ENCODE measurements at regions of chr15 and their contacts with region 1.

Region 1: DNA sequence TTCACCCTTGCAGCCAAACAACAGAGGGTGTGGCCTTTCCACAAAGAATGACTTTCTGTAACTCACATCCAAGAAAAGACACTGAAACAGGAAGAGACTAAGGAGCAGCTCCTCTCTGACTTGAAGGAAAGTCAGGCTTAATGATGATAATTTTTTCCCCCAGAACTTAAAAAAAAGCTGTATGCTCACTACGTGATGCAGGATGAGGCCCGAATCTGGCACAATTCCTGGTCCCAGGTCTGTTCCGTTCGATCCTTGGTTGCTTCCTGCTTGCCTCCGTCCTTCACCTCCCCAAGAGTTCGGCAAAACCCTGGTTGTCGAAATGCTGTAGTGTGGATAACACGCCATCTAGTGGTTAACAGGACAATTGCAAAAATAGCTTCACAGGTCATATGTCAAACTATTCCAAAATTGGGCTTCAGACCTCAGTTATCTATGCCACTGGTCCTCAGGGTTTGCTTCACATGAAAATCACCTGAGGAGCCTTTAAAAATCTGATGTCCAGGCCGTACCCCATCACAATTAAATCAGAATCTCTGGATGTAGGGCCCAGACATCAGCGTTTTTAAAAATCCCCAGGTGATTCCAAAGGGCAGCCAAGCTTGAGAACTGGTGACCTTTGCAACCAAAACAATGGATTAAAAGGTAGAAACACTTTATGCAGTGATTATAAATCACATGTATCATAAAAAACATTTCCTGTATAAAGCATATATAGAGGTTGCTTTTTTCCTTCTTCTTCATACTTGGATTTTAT is 28.1 kb upstream of the SYNM start:
- DNase-seq: peak; percentile 86
- ATAC-seq: peak; percentile 94
- H3K4me3 ChIP-seq: peak overlapping the region; percentile 19; the same call in 1 of the 2 replicates
- H3K27ac ChIP-seq: peak overlapping the region; percentile 14
- H3K4me1 ChIP-seq: no peaks in the 10 kb centered on the region
- H3K27me3 ChIP-seq: no peaks in the 10 kb centered on the region
- CTCF ChIP-seq: peak; percentile 91
- POLR2A ChIP-seq: no peak
- RAD21 ChIP-seq: peak; percentile 96

Region 2: DNA sequence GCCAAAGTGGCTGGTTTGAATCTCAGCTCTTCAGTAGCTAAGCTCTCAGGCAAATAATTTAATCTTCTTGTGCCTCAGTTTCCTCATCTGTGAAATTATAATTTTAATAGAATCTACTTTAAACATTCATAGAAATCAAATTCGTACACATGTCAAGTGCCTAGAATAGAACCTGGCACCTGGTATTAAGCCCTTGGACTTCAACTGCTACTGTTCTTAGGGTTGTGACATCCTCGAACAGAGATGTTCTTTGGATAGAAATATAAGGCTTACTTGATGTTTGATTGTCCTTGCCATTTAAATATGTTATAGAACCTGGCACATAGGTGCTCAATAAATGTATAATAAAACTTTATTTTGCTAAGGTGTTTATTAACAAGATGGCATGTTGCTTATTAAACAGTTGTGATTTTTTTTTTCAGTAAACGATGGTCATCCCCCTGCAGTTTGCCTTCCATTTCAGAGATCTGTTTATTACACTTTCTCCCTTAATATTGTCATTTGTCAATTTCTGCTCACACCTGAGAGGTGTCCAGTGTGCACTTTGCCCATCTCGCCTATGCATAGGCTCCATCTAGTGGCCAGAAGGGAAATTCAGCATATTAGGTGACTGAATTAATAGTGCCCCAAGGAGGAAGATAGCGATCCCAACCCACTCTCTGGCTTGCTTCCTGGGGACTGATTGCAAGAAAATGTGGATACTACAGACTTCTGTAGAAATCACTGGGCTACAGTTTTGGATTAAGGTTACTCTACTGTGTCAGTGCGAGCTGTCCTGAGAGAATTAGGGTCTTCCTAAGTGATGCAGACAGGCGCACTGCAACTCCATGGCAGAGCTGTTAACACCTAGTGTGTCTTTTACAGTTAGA is 417.7 kb before region 1 on chr15:
- CTCF ChIA-PET with region 1: no interaction called
- POLR2A ChIA-PET with region 1: no interaction called
- dilution Hi-C with region 1: no loop called
- in situ Hi-C with region 1: loop called (anchors 10 kb)
- intact Hi-C with region 1: no loop called
- DNase-seq: peak; percentile 60
- ATAC-seq: peak; percentile 84
- H3K4me3 ChIP-seq: no peak overlapping the region
- H3K27ac ChIP-seq: no peak overlapping the region
- H3K4me1 ChIP-seq: peaks cover 20% of the 10 kb centered on the region
- H3K27me3 ChIP-seq: no peaks in the 10 kb centered on the region
- CTCF ChIP-seq: peak; percentile 74
- POLR2A ChIP-seq: no peak
- RAD21 ChIP-seq: peak; percentile 64

Region 3: DNA sequence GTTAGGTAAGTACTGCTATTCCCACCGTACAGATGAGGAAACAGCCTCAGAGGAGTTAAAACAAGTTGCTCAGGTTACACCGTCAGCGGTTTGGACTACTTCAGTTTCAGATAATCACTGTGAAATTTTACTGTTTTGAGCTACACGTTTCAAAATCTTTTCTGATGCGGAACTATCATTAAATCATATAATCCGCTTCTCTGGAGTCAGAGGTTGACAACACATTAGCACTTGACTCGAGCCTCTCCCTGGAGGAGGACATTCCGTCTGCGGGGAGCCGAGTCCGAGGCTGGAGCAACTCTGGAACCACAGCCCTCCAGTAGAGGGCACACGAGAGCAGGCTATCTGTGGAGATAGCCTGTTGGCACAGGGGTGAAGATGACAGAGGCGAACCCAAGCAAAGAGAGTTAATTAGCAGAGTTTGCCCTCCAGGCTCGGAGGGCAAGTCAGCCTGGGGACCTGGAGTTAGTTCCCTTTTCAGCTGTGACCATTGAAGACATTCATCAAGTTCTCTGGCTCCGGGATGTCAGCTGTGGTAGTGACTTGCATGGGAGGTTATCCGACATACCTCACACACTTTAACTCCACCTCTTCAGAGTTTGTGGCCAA is 297.2 kb before region 1 on chr15:
- CTCF ChIA-PET with region 1: interaction called, 4 read pairs
- POLR2A ChIA-PET with region 1: no interaction called
- dilution Hi-C with region 1: no loop called
- in situ Hi-C with region 1: no loop called
- intact Hi-C with region 1: loop called (anchors 5 kb)
- DNase-seq: peak; percentile 65
- ATAC-seq: peak; percentile 91
- H3K4me3 ChIP-seq: no peak overlapping the region
- H3K27ac ChIP-seq: no peak overlapping the region
- H3K4me1 ChIP-seq: peaks cover 14% of the 10 kb centered on the region
- H3K27me3 ChIP-seq: no peaks in the 10 kb centered on the region
- CTCF ChIP-seq: peak; percentile 84
- POLR2A ChIP-seq: no peak
- RAD21 ChIP-seq: peak; percentile 87

Region 4: GRCh38 chr15:99135194-99135593 is 58.5 kb after region 1 on chr15:
- CTCF ChIA-PET with region 1: no interaction called
- POLR2A ChIA-PET with region 1: no interaction called
- dilution Hi-C with region 1: no loop called
- in situ Hi-C with region 1: no loop called
- intact Hi-C with region 1: no loop called
- DNase-seq: peak; percentile 47
- ATAC-seq: peak; percentile 65
- H3K4me3 ChIP-seq: no peak overlapping the region
- H3K27ac ChIP-seq: no peak overlapping the region
- H3K4me1 ChIP-seq: peaks cover 5% of the 10 kb centered on the region
- H3K27me3 ChIP-seq: no peaks in the 10 kb centered on the region
- CTCF ChIP-seq: no peak
- POLR2A ChIP-seq: no peak
- RAD21 ChIP-seq: no peak

Measured in IMR-90 (cell line).